ENCODE measurements at regions of chr19 and their contacts with region 1.

Region 1: DNA sequence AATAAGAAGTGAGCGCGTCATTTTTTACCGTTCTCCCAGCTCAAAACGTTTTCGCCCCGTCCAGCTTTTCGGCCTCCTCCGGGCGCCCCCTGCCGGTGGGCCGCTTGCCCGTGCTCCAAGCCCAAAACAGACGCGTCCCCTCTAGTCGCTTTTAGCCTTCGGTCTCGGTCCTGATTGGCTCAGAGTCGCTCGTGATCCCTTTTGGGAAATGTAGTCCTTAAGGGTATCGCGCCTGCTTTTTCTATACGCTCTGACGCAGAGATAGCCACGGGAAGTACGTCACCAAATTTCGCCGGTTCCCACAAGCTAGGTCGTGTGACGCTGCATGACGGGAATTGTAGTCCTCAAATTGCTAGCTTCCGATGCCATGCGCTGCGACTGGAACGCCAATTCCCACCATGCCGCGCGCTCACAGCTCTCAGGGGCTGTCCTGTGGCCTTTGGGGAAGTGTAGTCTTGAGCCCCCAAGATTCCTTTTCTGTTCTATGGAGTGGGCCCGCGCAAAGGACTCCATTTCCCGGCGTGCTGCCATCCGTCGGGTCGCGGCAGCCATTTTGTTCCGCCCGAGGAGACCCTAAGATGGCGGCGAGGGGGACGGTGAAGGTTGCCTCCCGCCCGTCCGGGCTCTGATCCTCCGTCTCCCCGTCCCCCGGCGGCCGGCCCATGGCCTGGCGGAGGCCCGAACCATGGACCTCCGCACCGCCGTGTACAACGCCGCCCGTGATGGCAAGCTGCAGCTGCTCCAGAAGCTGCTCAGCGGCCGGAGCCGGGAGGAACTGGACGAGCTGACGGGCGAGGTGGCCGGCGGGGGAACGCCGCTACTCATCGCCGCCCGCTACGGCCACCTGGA is at the start of gene FEM1A:
- DNase-seq: peak; percentile 100
- total RNA-seq, gene FEM1A: 7.7 to 9.1 TPM

Region 2: DNA sequence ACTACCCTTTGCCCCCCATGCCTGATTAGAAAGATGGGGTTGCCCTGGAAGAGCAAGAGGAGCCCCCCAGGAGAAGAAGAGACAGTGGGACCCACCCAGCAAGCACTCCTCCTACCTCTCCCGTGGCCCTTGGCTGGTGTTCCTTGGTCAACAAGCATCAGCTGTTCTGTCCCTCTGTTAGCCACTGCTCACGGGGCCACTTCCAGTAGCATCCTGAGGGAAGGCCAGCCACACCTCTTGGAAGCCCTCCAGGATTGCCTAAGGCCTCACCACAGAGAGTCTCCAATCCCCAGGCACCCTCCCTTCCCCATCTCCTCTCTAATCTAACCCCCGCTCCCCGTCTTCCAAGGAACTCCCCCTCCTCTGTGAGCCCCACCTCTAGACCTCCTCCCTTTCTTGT is 52.7 kb before region 1 on chr19:
- intact Hi-C with region 1: loop called (anchors 5 kb)
- DNase-seq: no peak

Measured in posterior vena cava (tissue), 2 donors.